HCT116 (cell line): ENCODE measurements at regions of chr12 and their contacts with region 1.

Region 1: DNA sequence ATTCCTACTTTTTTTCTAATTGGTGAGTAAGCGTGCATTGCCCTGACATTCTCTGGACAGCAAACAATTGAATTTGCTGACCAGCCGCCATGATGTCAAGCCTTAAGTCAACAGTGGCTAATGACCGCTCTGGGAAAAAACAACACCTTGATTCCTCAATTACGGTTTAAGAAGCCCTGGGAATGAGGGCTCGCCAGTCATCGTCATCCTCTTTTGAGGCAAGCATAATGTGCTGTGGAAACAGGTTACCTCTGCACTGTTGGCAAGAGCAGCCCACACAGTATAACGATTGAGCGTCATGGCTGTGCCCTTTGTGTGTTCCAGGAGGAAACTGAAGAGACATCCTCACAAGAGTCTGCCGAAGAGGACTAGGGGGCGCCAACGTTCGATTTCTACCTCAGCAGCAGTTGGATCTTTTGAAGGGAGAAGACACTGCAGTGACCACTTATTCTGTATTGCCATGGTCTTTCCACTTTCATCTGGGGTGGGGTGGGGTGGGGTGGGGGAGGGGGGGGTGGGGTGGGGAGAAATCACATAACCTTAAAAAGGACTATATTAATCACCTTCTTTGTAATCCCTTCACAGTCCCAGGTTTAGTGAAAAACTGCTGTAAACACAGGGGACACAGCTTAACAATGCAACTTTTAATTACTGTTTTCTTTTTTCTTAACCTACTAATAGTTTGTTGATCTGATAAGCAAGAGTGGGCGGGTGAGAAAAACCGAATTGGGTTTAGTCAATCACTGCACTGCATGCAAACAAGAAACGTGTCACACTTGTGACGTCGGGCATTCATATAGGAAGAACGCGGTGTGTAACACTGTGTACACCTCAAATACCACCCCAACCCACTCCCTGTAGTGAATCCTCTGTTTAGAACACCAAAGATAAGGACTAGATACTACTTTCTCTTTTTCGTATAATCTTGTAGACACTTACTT is 138.9 kb downstream of the HMGA2 start:
- DNase-seq: peak; percentile 57
- ATAC-seq: peak; percentile 81
- H3K4me3 ChIP-seq: no peak overlapping the region
- H3K27ac ChIP-seq: no peak overlapping the region
- H3K4me1 ChIP-seq: peaks cover 9 to 32% of the 10 kb centered on the region in 2 experiments
- H3K27me3 ChIP-seq: no peaks in the 10 kb centered on the region
- CTCF ChIP-seq: peak; percentile 39 to 75 (median 70); a peak in 5 of 6 replicates
- POLR2A ChIP-seq: no peak
- RAD21 ChIP-seq: peak; percentile 56

Region 2: GRCh38 chr12:65156366-65156841 is 806.8 kb before region 1 on chr12:
- CTCF ChIA-PET with region 1: no interaction called
- POLR2A ChIA-PET with region 1: no interaction called
- RAD21 ChIA-PET with region 1: no interaction called
- intact Hi-C with region 1: no loop called
- DNase-seq: no peak
- ATAC-seq: no peak
- H3K4me3 ChIP-seq: no peak overlapping the region
- H3K27ac ChIP-seq: no peak overlapping the region
- H3K4me1 ChIP-seq: peaks cover 0 to 2% of the 10 kb centered on the region in 2 experiments; a peak in 1 of 4 replicates
- H3K27me3 ChIP-seq: no peaks in the 10 kb centered on the region
- CTCF ChIP-seq: no peak
- POLR2A ChIP-seq: no peak
- RAD21 ChIP-seq: no peak

Region 3: DNA sequence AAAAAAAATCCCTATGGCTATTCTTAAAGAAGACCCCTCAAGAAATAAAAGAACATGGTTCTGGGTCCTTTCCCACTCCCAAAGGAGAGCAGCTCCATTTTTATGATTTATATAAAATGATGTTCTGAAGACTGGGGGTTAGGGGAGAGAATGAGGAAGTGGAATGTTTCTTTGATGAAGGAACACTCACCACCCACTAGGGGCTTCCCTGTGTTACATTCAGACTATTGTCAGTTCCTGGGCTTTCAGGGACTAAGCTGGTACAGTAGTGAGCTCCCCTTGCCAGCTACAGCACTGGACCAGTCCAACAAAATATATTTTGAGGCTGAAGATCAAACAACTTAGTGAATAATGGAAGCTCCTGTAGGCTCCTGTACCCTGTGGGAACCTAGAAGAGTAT is 40.0 kb before region 1 on chr12:
- CTCF ChIA-PET with region 1: no interaction called
- POLR2A ChIA-PET with region 1: no interaction called
- RAD21 ChIA-PET with region 1: no interaction called
- intact Hi-C with region 1: no loop called
- DNase-seq: no peak
- ATAC-seq: peak; percentile 23; the same call in 1 of the 2 replicates
- H3K4me3 ChIP-seq: no peak overlapping the region
- H3K27ac ChIP-seq: peak overlapping the region; percentile 4; the same call in 1 of the 2 replicates
- H3K4me1 ChIP-seq: peaks cover 44 to 62% of the 10 kb centered on the region in 2 experiments
- H3K27me3 ChIP-seq: no peaks in the 10 kb centered on the region
- CTCF ChIP-seq: peak in 2 of 3 experiments; percentile 25 to 34; a peak in 3 of 6 replicates
- POLR2A ChIP-seq: no peak
- RAD21 ChIP-seq: no peak

Region 4: GRCh38 chr12:65948320-65949008 is 14.7 kb before region 1 on chr12:
- CTCF ChIA-PET with region 1: interaction called, 3 read pairs
- POLR2A ChIA-PET with region 1: interaction called, 11 read pairs
- RAD21 ChIA-PET with region 1: no interaction called
- intact Hi-C with region 1: no loop called
- DNase-seq: peak; percentile 95
- ATAC-seq: peak; percentile 68
- H3K4me3 ChIP-seq: no peak overlapping the region
- H3K27ac ChIP-seq: peak overlapping the region; percentile 66
- H3K4me1 ChIP-seq: peaks cover 76 to 95% of the 10 kb centered on the region in 2 experiments
- H3K27me3 ChIP-seq: no peaks in the 10 kb centered on the region
- CTCF ChIP-seq: no peak
- POLR2A ChIP-seq: no peak
- RAD21 ChIP-seq: no peak

Region 5: GRCh38 chr12:66003951-66004350 is 40.8 kb after region 1 on chr12:
- CTCF ChIA-PET with region 1: no interaction called
- POLR2A ChIA-PET with region 1: no interaction called
- RAD21 ChIA-PET with region 1: no interaction called
- intact Hi-C with region 1: loop called (anchors 2 kb)
- DNase-seq: no peak
- ATAC-seq: no peak
- H3K4me3 ChIP-seq: no peak overlapping the region
- H3K27ac ChIP-seq: no peak overlapping the region
- H3K4me1 ChIP-seq: peaks cover 8 to 11% of the 10 kb centered on the region in 2 experiments; a peak in 3 of 4 replicates
- H3K27me3 ChIP-seq: no peaks in the 10 kb centered on the region
- CTCF ChIP-seq: no peak
- POLR2A ChIP-seq: no peak
- RAD21 ChIP-seq: no peak

Region 6: GRCh38 chr12:66087365-66087943 is 124.3 kb after region 1 on chr12:
- CTCF ChIA-PET with region 1: no interaction called
- POLR2A ChIA-PET with region 1: no interaction called
- RAD21 ChIA-PET with region 1: no interaction called
- intact Hi-C with region 1: loop called (anchors 5 kb)
- DNase-seq: peak; percentile 68
- ATAC-seq: peak; percentile 91
- H3K4me3 ChIP-seq: no peak overlapping the region
- H3K27ac ChIP-seq: no peak overlapping the region
- H3K4me1 ChIP-seq: peaks cover 0 to 14% of the 10 kb centered on the region in 2 experiments; a peak in 1 of 4 replicates
- H3K27me3 ChIP-seq: no peaks in the 10 kb centered on the region
- CTCF ChIP-seq: peak; percentile 75 to 97 (median 90)
- POLR2A ChIP-seq: no peak
- RAD21 ChIP-seq: peak; percentile 95

Region 7: GRCh38 chr12:66417217-66417616 is 454.0 kb after region 1 on chr12:
- CTCF ChIA-PET with region 1: no interaction called
- POLR2A ChIA-PET with region 1: no interaction called
- RAD21 ChIA-PET with region 1: no interaction called
- intact Hi-C with region 1: no loop called
- DNase-seq: no peak
- ATAC-seq: no peak
- H3K4me3 ChIP-seq: no peak overlapping the region
- H3K27ac ChIP-seq: no peak overlapping the region
- H3K4me1 ChIP-seq: no peaks in the 10 kb centered on the region
- H3K27me3 ChIP-seq: peaks cover 37% of the 10 kb centered on the region; the same call in 1 of the 2 replicates
- CTCF ChIP-seq: no peak
- POLR2A ChIP-seq: no peak
- RAD21 ChIP-seq: no peak

Region 8: DNA sequence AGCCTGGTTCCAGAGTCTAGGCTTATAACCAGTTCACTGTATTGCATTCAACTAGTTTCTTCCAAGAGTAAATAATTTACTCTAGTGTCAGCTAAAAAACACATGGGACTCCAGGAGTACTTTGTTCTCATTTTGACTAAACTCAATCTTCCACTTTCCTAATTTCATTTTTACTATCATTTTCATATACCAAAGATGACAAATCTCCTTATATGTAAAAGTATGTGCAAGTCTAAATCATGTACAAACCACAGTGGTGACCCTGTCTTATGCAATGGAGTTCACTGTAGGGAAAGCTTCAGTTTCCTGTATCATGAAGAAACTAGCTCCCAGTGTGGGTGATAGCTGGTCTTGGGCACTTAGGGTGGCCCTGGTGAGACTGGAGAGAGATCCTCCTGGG is 490.7 kb after region 1 on chr12:
- CTCF ChIA-PET with region 1: no interaction called
- POLR2A ChIA-PET with region 1: no interaction called
- RAD21 ChIA-PET with region 1: no interaction called
- intact Hi-C with region 1: no loop called
- DNase-seq: no peak
- ATAC-seq: no peak
- H3K4me3 ChIP-seq: no peak overlapping the region
- H3K27ac ChIP-seq: no peak overlapping the region
- H3K4me1 ChIP-seq: 0 out of 4 replicates have a peak, but pooled peaks cover 0 to 3% of the 10 kb centered on the region in 2 experiments
- H3K27me3 ChIP-seq: peaks cover 57% of the 10 kb centered on the region
- CTCF ChIP-seq: no peak
- POLR2A ChIP-seq: no peak
- RAD21 ChIP-seq: no peak

Region 9: GRCh38 chr12:66533767-66534166 is 570.6 kb after region 1 on chr12:
- CTCF ChIA-PET with region 1: no interaction called
- POLR2A ChIA-PET with region 1: no interaction called
- RAD21 ChIA-PET with region 1: no interaction called
- intact Hi-C with region 1: loop called (anchors 5 kb)
- DNase-seq: no peak
- ATAC-seq: no peak
- H3K4me3 ChIP-seq: no peak overlapping the region
- H3K27ac ChIP-seq: no peak overlapping the region
- H3K4me1 ChIP-seq: no peaks in the 10 kb centered on the region
- H3K27me3 ChIP-seq: peaks cover 31% of the 10 kb centered on the region
- CTCF ChIP-seq: no peak
- POLR2A ChIP-seq: no peak
- RAD21 ChIP-seq: no peak